ENCODE measurements at regions of chr11 and their contacts with region 1.

Region 1: GRCh38 chr11:46006418-46007070 is 84.1 kb downstream of the LARGE2 start:
- DNase-seq: peak; percentile 37
- H3K4me3 Mint-ChIP-seq: no peak overlapping the region
- H3K27ac Mint-ChIP-seq: no peak overlapping the region
- H3K4me1 Mint-ChIP-seq: no peaks in the 10 kb centered on the region
- H3K27me3 Mint-ChIP-seq: no peaks in the 10 kb centered on the region
- CTCF ChIP-seq: peak; percentile 36

Region 2: GRCh38 chr11:45846974-45847910 is 159.3 kb before region 1 on chr11 and contains the start of gene CRY2:
- CTCF ChIA-PET with region 1: no interaction called
- intact Hi-C with region 1: loop called (anchors 1 kb)
- DNase-seq: peak; percentile 99
- H3K4me3 Mint-ChIP-seq: peak within 1 kb of the TSS; percentile 85
- H3K27ac Mint-ChIP-seq: peak within 1 kb of the TSS; percentile 92
- H3K4me1 Mint-ChIP-seq: peaks cover 33% of the 10 kb centered on the region
- H3K27me3 Mint-ChIP-seq: no peaks in the 10 kb centered on the region
- CTCF ChIP-seq: no peak
- total RNA-seq, gene CRY2: 14.9 and 16.1 TPM in 2 replicates

Region 3: DNA sequence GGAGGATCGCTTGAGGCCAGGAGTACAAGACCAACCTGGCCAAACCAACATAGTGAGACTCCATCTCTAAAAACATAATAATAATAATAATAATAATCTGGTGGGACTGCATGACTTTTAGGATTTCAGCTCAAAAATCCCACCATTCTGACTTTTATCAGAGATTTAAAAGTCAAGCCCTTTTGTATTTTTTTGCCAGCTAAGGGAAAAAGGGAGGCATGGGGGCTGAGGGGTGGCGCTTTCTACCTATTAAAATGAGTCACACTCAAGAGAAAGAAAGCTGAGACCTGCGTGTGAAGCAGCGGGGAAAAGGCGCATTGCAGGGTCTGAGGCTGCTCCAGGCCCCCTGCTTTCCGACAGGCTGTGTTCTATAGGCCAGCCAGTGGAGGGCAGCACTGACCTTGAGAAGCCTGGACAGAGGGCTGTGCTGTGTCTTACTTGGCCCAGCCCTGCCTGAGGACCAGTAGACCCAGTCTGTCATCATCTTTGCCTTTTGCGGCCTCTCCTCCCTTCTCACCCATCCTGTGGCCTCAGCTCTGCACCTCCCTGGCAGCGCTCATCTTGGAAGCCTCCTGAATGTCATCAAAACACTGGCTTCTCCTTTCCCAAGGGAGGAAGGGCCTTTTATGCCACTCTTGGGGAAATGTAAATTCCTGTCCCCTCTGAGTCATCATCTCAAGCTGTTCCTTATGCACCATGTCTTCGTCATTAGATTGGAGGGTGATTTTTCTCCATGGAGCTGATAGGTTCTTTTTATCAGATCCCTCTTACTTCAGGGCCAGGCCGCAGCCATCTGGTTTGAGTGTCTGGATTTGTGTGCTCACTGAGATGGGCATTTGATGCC is 133.8 kb before region 1 on chr11:
- CTCF ChIA-PET with region 1: interaction called, 13 read pairs
- intact Hi-C with region 1: loop called (anchors 1 kb)
- DNase-seq: peak; percentile 60
- H3K4me3 Mint-ChIP-seq: no peak overlapping the region
- H3K27ac Mint-ChIP-seq: no peak overlapping the region
- H3K4me1 Mint-ChIP-seq: no peaks in the 10 kb centered on the region
- H3K27me3 Mint-ChIP-seq: no peaks in the 10 kb centered on the region
- CTCF ChIP-seq: peak; percentile 59

Region 4: DNA sequence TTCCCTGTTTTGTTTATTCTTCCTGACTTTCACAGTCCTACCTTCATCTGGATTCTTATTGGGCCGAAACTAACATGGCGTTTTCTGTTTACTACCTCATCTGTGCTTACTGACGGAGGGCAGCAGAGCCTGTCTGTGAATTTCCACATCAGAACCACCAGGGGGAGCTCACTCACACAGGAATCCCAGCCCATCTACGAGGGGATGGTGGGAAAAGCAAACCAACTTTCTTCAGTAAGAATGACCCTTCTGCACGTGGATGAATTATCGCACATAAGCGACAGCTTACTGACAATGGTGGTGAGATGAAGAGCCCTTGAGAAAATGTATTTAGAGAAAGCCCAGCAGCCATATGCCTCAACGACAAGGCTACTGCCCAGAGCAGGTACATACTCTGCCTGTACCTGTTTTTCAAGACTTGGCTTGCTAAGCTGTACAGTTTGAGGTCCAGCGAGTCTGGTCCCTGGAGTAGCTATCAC is 41.6 kb before region 1 on chr11:
- CTCF ChIA-PET with region 1: interaction called, 23 read pairs
- intact Hi-C with region 1: loop called (anchors 2 kb)
- DNase-seq: peak; percentile 63
- H3K4me3 Mint-ChIP-seq: no peak overlapping the region
- H3K27ac Mint-ChIP-seq: no peak overlapping the region
- H3K4me1 Mint-ChIP-seq: no peaks in the 10 kb centered on the region
- H3K27me3 Mint-ChIP-seq: no peaks in the 10 kb centered on the region
- CTCF ChIP-seq: peak; percentile 87

Measured in Calu3 (cell line).